T-cell (primary cell): ENCODE measurements at regions of chr22 and their contacts with region 1.

Region 1: GRCh38 chr22:37472418-37473006 is 13.7 kb downstream of the MFNG start:
- DNase-seq: peak in 26 of 35 experiments; percentile 7 to 67 (median 32)
- ATAC-seq: peak; percentile 52 to 64 (median 55)
- H3K4me3 ChIP-seq: no peak overlapping the region
- H3K4me3 Mint-ChIP-seq: no peak overlapping the region
- H3K27ac ChIP-seq: no peak overlapping the region
- H3K27ac Mint-ChIP-seq: peak overlapping the region in 1 of 2 donors; percentile 19
- H3K4me1 ChIP-seq: peaks cover 0 to 4% of the 10 kb centered on the region in 2 experiments
- H3K4me1 Mint-ChIP-seq: peaks cover 8 to 16% (median 15%) of the 10 kb centered on the region in 3 donors
- H3K27me3 ChIP-seq: no peaks in the 10 kb centered on the region
- H3K27me3 Mint-ChIP-seq: no peaks in the 10 kb centered on the region

Region 2: DNA sequence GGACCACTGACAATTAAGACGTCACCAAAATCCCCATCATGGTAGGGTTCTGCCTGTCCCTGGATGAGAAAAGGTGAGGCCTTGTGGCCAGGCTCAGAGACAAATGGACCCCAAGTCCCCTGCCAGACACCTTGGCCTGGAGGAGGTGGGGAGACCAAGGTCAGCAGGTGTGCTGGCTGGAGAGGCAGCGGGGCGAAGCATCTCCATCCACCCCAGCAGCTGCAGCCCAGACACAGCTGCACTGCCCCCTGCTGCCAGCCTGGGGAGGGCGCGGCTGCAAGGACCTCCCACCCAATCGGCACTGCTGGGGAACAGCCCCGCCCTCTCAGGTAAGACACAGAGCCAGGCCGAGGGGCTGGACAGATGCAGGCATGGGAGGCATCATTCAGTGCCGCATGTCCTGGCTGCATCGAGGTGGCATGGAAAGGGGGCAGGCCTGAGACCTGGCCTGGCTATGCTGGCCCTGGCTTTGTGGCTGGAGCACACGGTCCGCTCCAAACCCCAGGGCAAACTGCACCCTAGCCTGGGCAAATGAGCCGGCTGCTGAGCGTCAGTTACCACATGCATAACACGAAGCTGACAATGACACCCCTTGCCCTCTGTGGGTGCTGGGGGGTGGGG is 25.9 kb after region 1 on chr22:
- CTCF ChIA-PET with region 1: interaction called, 3 to 11 read pairs
- POLR2A ChIA-PET with region 1: no interaction called
- DNase-seq: peak; percentile 48 to 83 (median 66)
- ATAC-seq: peak; percentile 92 to 99 (median 92)
- H3K4me3 ChIP-seq: no peak overlapping the region
- H3K4me3 Mint-ChIP-seq: no peak overlapping the region
- H3K27ac ChIP-seq: no peak overlapping the region
- H3K27ac Mint-ChIP-seq: no peak overlapping the region
- H3K4me1 ChIP-seq: peaks cover 6 to 31% of the 10 kb centered on the region in 2 experiments
- H3K4me1 Mint-ChIP-seq: peaks cover 24 to 35% (median 30%) of the 10 kb centered on the region in 3 donors
- H3K27me3 ChIP-seq: peaks cover 0 to 56% of the 10 kb centered on the region in 2 experiments
- H3K27me3 Mint-ChIP-seq: peaks cover 0 to 7% of the 10 kb centered on the region in 2 donors

Region 3: GRCh38 chr22:37588546-37589215 is 116.2 kb after region 1 on chr22:
- CTCF ChIA-PET with region 1: interaction called, 3 to 13 read pairs
- POLR2A ChIA-PET with region 1: no interaction called
- DNase-seq: no peak
- ATAC-seq: no peak
- H3K4me3 ChIP-seq: no peak overlapping the region
- H3K4me3 Mint-ChIP-seq: no peak overlapping the region
- H3K27ac ChIP-seq: no peak overlapping the region
- H3K27ac Mint-ChIP-seq: no peak overlapping the region
- H3K4me1 ChIP-seq: peaks cover 0 to 6% of the 10 kb centered on the region in 2 experiments
- H3K4me1 Mint-ChIP-seq: peaks cover 12 to 17% (median 12%) of the 10 kb centered on the region in 3 donors
- H3K27me3 ChIP-seq: peaks cover 0 to 34% of the 10 kb centered on the region in 2 experiments
- H3K27me3 Mint-ChIP-seq: peaks cover 0 to 18% of the 10 kb centered on the region in 2 donors

Region 4: DNA sequence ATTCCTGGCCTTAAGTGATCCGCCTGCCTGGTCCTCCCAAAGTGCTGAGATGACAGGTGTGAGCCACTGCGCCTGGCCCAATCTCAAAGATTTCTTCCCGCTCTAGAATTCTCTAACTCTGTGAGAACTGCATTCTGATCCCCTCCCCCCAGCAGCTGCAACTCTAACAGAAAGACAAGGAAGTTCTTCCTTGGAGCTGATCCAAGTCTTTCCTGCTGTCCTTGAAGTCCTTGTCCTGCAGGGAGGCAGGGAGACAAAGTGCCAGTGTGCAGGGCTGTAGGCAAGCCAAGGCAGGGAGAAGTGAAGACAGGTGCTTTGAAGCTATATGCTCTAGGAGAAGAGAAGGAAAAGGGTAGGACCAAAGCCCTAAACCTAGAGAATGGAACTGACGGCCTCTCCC is 126.6 kb after region 1 on chr22:
- CTCF ChIA-PET with region 1: no interaction called
- POLR2A ChIA-PET with region 1: no interaction called
- DNase-seq: no peak
- ATAC-seq: no peak
- H3K4me3 ChIP-seq: no peak overlapping the region
- H3K4me3 Mint-ChIP-seq: no peak overlapping the region
- H3K27ac ChIP-seq: no peak overlapping the region
- H3K27ac Mint-ChIP-seq: no peak overlapping the region
- H3K4me1 ChIP-seq: peaks cover 2 to 6% of the 10 kb centered on the region in 2 experiments
- H3K4me1 Mint-ChIP-seq: peaks cover 13 to 20% (median 19%) of the 10 kb centered on the region in 3 donors
- H3K27me3 ChIP-seq: peaks cover 0 to 8% of the 10 kb centered on the region in 2 experiments
- H3K27me3 Mint-ChIP-seq: no peaks in the 10 kb centered on the region